Natural killer cell (primary cell): ENCODE measurements at regions of chr2 and their contacts with region 1.

Region 1: DNA sequence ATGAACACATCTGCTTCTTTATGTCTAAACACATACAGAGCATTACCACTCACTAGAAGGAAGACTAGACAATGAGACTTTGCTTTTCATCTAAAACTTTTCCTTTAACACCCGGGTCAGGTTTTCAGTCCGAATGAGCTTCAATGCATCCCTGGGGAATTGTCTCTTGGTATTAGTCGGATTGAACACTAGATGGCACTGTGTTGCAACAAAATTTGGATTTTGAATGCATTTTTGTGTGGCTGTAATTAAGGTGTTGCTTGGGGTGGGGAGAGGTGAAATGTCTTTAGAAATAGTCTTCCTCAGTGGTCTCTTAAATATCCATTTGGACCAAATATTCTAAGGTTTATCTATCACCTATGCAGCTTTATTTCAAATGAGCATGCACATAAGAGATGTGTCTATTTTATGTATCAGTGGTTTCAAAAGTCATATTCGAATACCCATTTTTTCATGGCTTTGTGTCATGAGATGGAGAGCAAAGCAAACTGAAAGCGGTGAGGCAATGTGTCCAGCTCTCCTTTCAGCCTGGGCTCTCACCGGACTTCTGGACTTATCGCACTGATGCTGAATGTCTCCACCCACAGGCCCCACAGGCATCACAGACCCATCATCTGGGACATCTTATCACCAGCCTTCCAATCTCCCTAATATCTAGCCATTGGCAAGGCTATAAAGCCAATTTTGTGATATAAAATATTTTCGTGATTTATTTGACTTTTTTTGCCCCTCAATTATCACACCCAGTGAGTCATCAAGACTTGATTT is 510.3 kb downstream of the RNF144A start:
- DNase-seq: peak in 1 of 2 donors; percentile 84
- ATAC-seq: peak; percentile 50 to 66 (median 54)
- H3K4me3 ChIP-seq: no peak overlapping the region
- H3K4me3 Mint-ChIP-seq: no peak overlapping the region
- H3K27ac ChIP-seq: no peak overlapping the region
- H3K27ac Mint-ChIP-seq: peak overlapping the region in 1 of 2 donors; percentile 29
- H3K4me1 ChIP-seq: peaks cover 40% of the 10 kb centered on the region
- H3K4me1 Mint-ChIP-seq: peaks cover 50 to 52% of the 10 kb centered on the region in 2 donors
- H3K27me3 ChIP-seq: no peaks in the 10 kb centered on the region
- H3K27me3 Mint-ChIP-seq: no peaks in the 10 kb centered on the region
- CTCF ChIP-seq: peak; percentile 90

Region 2: DNA sequence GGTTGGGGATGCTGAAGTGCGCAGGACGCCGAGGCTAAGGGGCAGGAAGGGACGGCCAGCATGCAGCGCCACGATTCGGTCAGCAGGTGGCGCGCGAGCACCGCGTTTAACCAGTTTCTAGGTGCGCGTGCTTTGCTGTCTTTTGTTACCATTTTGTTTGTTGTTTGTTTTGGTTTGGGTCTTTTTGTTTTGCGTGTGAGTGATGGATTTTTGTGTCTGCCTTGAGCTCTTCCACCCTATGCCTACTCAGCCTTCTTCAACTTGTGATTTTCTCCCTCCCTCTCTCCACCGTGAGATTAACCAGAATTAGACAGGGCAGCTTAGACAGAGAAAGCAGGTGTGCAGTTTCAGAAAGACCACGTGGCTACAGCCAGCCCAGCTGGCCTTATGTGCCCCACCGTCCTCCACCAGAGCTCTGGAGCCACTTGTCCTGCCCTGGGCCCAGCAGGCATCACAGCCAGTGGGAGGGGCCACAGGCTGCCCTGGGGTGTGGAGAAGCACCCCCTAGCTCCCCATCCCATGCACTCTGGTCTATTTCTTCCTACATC is 330.1 kb before region 1 on chr2:
- intact Hi-C with region 1: no loop called
- DNase-seq: peak; percentile 73 to 84
- ATAC-seq: peak; percentile 89 to 97 (median 96)
- H3K4me3 ChIP-seq: no peak overlapping the region
- H3K4me3 Mint-ChIP-seq: peak overlapping the region; percentile 59
- H3K27ac ChIP-seq: no peak overlapping the region
- H3K27ac Mint-ChIP-seq: no peak overlapping the region
- H3K4me1 ChIP-seq: peaks cover 7% of the 10 kb centered on the region
- H3K4me1 Mint-ChIP-seq: peaks cover 6 to 8% of the 10 kb centered on the region in 2 donors
- H3K27me3 ChIP-seq: no peaks in the 10 kb centered on the region
- H3K27me3 Mint-ChIP-seq: no peaks in the 10 kb centered on the region
- CTCF ChIP-seq: peak; percentile 99

Region 3: DNA sequence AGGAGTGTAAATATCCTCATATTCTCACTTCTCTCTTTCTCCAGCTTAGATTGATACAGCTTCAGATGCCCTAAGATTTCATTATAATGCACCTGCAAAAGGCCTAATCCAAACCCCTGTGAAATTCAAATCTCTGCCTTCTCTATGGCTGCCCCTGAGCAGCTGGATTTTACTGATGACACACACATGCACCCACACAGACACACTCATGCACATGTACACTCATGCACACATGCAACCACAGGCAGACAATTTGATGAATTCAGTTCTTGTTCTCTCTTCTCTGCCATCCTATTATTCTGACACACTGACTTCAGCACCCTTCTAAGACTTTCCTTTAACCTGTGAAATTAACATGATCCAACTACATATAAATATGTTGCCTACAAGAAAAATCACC is 53.0 kb after region 1 on chr2:
- intact Hi-C with region 1: no loop called
- DNase-seq: no peak
- ATAC-seq: no peak
- H3K4me3 ChIP-seq: no peak overlapping the region
- H3K4me3 Mint-ChIP-seq: no peak overlapping the region
- H3K27ac ChIP-seq: no peak overlapping the region
- H3K27ac Mint-ChIP-seq: no peak overlapping the region
- H3K4me1 ChIP-seq: no peaks in the 10 kb centered on the region
- H3K4me1 Mint-ChIP-seq: no peaks in the 10 kb centered on the region
- H3K27me3 ChIP-seq: no peaks in the 10 kb centered on the region
- H3K27me3 Mint-ChIP-seq: peaks cover 5 to 7% of the 10 kb centered on the region in 2 donors
- CTCF ChIP-seq: no peak

Region 4: DNA sequence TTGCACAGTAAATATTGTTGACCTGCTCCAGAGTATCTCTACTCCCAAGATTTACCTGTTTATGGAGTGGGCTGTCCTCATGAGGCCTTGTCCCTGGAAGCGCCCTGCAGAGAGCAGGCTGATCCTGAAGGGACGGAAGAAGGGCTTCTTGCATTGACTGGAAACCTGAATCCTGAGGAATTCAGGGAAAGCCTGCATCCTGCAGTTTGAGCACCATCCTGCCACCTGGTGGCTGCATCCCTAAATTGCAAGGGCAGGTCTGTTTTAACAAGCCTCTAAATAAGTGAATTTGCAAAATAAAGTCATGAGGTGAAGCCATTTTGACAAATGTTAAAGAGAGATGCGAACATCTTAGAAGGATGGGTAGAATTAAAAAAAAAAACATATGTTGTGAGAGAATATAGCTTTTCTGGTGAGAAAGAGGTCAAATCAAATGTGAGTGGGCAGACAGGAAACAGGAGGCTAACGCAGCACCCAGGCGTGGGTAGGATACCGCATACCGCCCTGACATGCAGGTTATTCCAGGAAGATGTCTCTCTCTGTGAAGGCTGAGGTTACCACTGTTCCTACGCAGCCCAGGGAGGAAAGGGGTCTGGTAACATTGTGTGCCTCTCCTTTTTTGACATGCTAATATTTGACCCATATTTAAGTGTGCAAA is 244.7 kb after region 1 on chr2:
- intact Hi-C with region 1: loop called (anchors 2 kb)
- DNase-seq: peak; percentile 30 to 76
- ATAC-seq: peak; percentile 55 to 69 (median 64)
- H3K4me3 ChIP-seq: no peak overlapping the region
- H3K4me3 Mint-ChIP-seq: peak overlapping the region; percentile 80
- H3K27ac ChIP-seq: peak overlapping the region; percentile 9
- H3K27ac Mint-ChIP-seq: peak overlapping the region; percentile 52 to 74
- H3K4me1 ChIP-seq: peaks cover 21% of the 10 kb centered on the region
- H3K4me1 Mint-ChIP-seq: peaks cover 23 to 28% of the 10 kb centered on the region in 2 donors
- H3K27me3 ChIP-seq: no peaks in the 10 kb centered on the region
- H3K27me3 Mint-ChIP-seq: peaks cover 0 to 4% of the 10 kb centered on the region in 2 donors
- CTCF ChIP-seq: peak; percentile 68

Region 5: DNA sequence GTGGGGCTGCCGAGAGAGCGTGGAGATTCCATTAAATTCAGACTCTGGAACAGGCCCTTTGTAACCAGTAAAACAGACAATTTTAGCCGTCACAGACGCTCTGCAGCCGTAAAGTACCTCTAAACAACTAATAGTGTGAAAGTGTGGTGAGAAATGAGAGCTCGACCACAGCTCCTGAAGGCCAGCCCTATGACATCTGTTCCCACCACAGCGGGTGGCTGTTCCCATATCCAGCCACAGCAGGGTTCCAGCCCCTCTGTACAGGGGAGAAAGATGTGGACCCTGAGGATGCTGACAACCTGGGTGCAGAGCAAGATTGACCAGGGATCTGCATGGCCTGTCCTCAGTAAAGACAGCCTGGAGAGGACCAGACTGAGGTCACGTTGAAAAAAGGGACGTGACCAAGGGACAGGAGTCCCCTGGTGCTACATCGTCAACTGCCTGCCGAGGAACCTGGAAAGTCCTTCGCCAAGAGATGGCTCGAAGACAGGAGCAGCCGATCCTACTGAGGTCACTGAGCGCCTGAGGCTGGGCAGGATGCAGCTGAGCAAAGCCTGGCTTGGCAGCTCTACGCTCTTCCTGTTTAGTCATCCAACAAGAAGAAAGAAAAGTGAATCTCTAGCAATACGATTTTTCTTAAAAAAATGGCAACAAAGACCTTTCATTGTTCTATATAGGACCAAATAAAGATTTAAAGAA is 321.4 kb after region 1 on chr2:
- intact Hi-C with region 1: loop called (anchors 2 kb)
- DNase-seq: peak in 1 of 2 donors; percentile 69
- ATAC-seq: peak; percentile 50 to 61 (median 53)
- H3K4me3 ChIP-seq: no peak overlapping the region
- H3K4me3 Mint-ChIP-seq: peak overlapping the region; percentile 67
- H3K27ac ChIP-seq: peak overlapping the region; percentile 85
- H3K27ac Mint-ChIP-seq: peak overlapping the region; percentile 44 to 79
- H3K4me1 ChIP-seq: peaks cover 38% of the 10 kb centered on the region
- H3K4me1 Mint-ChIP-seq: peaks cover 37 to 42% of the 10 kb centered on the region in 2 donors
- H3K27me3 ChIP-seq: no peaks in the 10 kb centered on the region
- H3K27me3 Mint-ChIP-seq: no peaks in the 10 kb centered on the region
- CTCF ChIP-seq: no peak